ENCODE measurements at regions of chr7 and their contacts with region 1.

Region 1: GRCh38 chr7:39623018-39623731 is at the start of gene RALA:
- DNase-seq: peak; percentile 93
- H3K4me3 ChIP-seq: peak within 1 kb of the TSS; percentile 72 to 89 (median 76)
- H3K27ac ChIP-seq: peak within 1 kb of the TSS; percentile 88
- H3K4me1 ChIP-seq: peaks cover 44% of the 10 kb centered on the region
- H3K27me3 ChIP-seq: no peaks in the 10 kb centered on the region
- CTCF ChIP-seq: no peak
- total RNA-seq, gene RALA: 15.2 to 51.7 TPM

Region 2: DNA sequence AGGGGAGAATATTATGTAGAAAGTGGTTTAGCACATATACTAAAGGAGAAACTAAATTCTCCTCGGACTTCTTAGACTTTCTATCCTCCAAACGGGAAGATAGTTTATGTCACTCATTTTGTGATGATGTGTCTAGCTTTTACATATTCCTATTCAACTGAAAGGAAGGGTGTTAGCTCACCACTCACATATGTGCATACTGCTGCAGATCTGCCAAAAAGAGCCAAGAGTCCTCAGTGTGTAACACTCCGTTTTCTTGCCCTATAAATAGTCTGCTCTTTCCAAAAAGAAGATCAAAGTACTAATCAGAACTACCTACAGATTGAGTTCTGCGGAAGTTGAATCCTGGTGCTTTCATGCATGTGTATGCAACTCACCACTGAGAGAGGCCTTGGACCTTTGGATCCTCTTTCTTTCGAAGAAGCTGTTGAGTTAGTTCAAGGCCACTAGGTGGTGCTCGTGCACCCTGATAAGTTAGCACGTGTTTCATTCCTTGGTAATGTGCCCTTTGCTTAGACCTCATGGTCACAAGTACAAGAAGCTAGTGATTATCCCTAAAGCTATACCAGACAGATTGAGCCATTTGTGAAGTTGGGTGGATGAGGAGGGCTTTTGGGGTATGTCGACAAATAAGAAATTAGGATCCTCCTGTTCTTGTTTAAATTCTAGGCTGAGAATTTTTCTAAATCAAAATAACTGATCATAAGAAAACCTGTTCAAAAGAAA is 42.9 kb before region 1 on chr7:
- CTCF ChIA-PET with region 1: interaction called, 5 read pairs
- dilution Hi-C with region 1: no loop called
- in situ Hi-C with region 1: no loop called
- intact Hi-C with region 1: loop called (anchors 1 kb)
- DNase-seq: peak; percentile 76
- H3K4me3 ChIP-seq: no peak overlapping the region
- H3K27ac ChIP-seq: no peak overlapping the region
- H3K4me1 ChIP-seq: no peaks in the 10 kb centered on the region
- H3K27me3 ChIP-seq: no peaks in the 10 kb centered on the region
- CTCF ChIP-seq: peak; percentile 80 to 81

Region 3: DNA sequence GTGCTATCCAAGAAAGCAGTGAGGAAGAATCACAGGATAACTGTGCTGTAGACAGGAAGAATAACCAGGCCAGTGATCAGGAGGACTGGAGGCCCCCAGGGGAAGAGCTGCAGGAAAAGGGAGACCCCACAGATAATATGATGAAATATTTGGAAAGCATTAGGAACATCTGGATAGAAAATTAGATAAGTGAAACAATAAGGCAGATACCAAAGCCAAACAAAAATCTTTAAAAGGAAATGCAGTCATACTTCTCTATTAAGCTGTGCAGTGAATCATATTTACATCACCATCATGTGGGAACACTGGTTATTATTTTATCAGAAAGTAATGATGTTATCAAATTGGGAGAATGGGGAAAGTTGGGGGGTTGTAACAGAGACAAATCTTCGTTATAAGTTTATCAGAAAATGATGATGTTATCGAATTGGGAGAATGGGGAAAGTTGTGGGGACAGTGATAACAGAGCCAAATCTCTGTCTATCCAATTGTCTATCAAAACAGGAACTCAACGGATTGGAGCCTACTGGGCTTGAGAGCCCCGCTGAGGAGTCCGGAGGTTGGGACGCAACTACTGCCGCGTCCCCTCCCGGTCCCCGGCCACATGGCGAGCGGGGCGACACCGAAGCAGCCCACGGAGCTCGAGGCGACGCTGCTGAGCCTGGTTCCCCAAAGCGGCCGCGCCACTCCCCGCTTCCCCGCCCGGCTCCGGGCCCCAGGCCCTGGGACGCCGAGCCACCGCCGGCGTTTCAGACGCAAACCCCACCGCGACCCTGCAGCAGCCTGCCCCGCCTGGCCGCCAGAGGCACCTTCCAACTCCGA is 13.9 kb before region 1 on chr7:
- CTCF ChIA-PET with region 1: interaction called, 13 read pairs
- dilution Hi-C with region 1: no loop called
- in situ Hi-C with region 1: no loop called
- intact Hi-C with region 1: loop called (anchors 2 kb)
- DNase-seq: peak; percentile 74
- H3K4me3 ChIP-seq: peak overlapping the region in 1 of 3 experiments; percentile 16
- H3K27ac ChIP-seq: peak overlapping the region; percentile 75
- H3K4me1 ChIP-seq: peaks cover 55% of the 10 kb centered on the region
- H3K27me3 ChIP-seq: no peaks in the 10 kb centered on the region
- CTCF ChIP-seq: no peak

Region 4: GRCh38 chr7:39703144-39703543 is 80.0 kb after region 1 on chr7:
- CTCF ChIA-PET with region 1: no interaction called
- dilution Hi-C with region 1: no loop called
- in situ Hi-C with region 1: no loop called
- intact Hi-C with region 1: loop called (anchors 5 kb)
- DNase-seq: no peak
- H3K4me3 ChIP-seq: no peak overlapping the region
- H3K27ac ChIP-seq: no peak overlapping the region
- H3K4me1 ChIP-seq: peaks cover 19% of the 10 kb centered on the region
- H3K27me3 ChIP-seq: no peaks in the 10 kb centered on the region
- CTCF ChIP-seq: peak; percentile 20 to 39

Region 5: DNA sequence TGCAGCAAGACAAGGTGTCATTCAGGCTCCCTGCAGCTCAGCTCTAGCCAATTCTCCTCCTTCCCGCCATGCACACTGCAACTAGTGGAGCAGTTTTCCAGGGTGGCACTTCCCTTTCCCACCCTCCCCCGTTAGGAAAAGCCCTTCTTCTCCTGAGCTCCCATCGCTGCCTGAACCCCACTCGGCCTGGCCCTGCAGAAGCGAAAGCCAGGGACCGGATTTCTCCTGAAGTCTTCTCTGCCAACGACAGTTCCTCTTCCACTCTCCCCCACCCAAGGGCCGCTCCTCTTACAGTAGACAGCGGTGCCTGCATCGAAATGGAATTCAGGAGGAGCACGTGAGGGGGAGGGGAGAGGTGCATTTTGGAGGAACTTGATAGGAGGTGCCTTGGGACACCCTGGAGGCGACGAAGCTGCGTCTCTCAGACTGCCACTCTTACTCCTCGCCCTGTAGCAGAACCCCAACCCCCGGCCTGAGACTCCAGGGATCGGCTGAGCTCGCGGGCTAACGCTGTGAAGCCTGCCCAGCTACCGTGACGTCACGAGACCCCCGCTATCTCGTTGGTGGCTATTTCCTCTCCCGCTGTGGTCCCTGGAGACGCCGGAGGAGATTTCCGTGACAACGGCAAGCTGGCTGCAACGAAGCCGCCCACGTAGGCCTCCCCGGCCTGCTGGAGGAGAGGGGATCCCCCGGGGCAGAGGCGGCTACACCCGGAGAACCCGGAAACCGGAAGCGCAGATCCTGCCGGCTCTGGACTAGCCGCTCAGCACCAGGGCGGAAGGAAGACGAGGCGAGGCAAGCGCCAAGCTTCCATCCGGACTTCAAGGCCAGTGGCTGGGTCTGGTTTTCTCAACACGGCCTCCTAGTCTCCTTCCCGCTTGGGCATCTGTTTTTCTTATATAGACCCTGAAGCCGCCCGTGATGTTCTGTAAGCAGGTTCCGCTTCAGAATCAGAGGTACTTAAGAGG is 109.9 kb after region 1 on chr7:
- CTCF ChIA-PET with region 1: no interaction called
- dilution Hi-C with region 1: no loop called
- in situ Hi-C with region 1: no loop called
- intact Hi-C with region 1: loop called (anchors 1 kb)
- DNase-seq: peak; percentile 94
- H3K4me3 ChIP-seq: peak overlapping the region; percentile 51 to 65 (median 56)
- H3K27ac ChIP-seq: peak overlapping the region; percentile 92
- H3K4me1 ChIP-seq: peaks cover 19% of the 10 kb centered on the region
- H3K27me3 ChIP-seq: no peaks in the 10 kb centered on the region
- CTCF ChIP-seq: no peak

Region 6: GRCh38 chr7:39746103-39746819 is 123.1 kb after region 1 on chr7:
- CTCF ChIA-PET with region 1: no interaction called
- dilution Hi-C with region 1: no loop called
- in situ Hi-C with region 1: no loop called
- intact Hi-C with region 1: loop called (anchors 1 kb)
- DNase-seq: peak; percentile 69
- H3K4me3 ChIP-seq: no peak overlapping the region
- H3K27ac ChIP-seq: peak overlapping the region; percentile 29
- H3K4me1 ChIP-seq: peaks cover 41% of the 10 kb centered on the region
- H3K27me3 ChIP-seq: no peaks in the 10 kb centered on the region
- CTCF ChIP-seq: peak; percentile 79 to 89

Region 7: DNA sequence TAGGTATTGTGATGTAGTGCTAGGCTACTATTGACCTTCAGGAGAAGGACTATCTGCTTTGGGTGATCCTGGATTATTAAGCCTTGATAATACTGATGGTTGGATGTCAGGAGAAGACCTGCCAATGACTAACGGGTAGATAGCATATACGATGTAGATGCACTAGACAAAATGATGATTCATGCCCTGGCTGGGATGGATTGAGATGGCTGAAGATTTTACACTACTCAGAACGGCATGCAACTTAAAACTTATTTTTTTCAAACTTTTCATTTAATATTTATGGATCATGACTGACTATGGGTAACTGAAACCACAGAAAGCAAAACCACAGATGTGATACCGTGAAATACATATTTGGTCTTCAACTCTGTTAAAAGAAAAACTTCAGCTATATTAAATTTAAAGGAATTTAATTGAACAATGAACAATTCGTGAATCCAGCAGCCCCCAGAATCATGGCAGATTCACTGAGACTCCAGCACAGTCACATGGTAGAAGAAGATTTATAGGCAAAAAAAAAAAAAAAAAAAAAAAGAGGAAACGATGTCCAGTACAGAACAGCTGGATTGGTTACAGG is 202.3 kb after region 1 on chr7:
- CTCF ChIA-PET with region 1: no interaction called
- dilution Hi-C with region 1: no loop called
- in situ Hi-C with region 1: no loop called
- intact Hi-C with region 1: no loop called
- DNase-seq: no peak
- H3K4me3 ChIP-seq: no peak overlapping the region
- H3K27ac ChIP-seq: no peak overlapping the region
- H3K4me1 ChIP-seq: no peaks in the 10 kb centered on the region
- H3K27me3 ChIP-seq: no peaks in the 10 kb centered on the region
- CTCF ChIP-seq: no peak

Region 8: DNA sequence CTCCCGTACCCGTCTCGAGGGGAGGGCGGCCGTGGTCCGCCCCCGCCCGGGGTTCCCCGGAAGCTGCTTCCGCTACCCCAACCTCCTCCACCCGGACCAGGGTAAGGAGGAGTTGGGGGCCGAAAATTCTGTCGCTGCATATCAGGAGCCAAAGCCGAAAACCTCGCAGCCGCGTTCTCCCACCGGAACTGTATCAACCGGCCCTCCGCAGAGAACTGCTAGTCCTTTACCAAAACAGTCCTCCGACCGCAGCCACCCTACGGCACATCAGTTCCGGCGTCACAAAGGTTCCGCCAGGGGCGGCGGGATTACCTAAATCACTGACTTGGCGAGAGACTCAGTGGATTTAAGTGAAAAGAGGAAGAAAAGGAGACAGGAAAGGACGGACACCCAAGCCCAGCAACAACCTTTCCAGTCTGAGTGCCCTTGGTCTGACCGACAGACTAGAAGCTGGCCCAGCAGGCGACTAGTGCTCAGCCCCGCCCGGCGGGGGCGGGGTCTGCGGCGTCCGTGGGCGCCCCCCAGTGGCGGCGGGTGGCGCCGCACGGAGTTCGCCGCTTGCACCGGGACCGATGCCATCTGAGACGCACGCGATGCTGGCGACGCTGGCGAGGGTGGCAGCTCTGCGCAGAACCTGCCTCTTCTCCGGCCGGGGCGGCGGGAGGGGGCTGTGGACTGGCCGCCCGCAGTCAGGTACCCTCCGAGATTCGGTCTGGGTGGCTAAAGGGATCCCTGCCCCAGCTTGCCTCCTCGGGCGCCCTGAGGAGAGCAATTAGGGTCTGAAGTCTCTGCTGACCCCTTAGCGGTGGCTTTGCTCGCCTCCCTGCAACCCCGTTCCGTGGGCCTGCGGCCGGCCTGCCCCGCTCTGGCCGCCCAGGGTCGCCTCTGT is 511.5 kb after region 1 on chr7 and contains the starts of genes MPLKIP and SUGCT:
- CTCF ChIA-PET with region 1: no interaction called
- dilution Hi-C with region 1: no loop called
- in situ Hi-C with region 1: no loop called
- intact Hi-C with region 1: loop called (anchors 10 kb)
- DNase-seq: peak; percentile 85
- H3K4me3 ChIP-seq: peak within 1 kb of the TSS; percentile 72 to 96 (median 80)
- H3K27ac ChIP-seq: peak within 1 kb of the TSS; percentile 88
- H3K4me1 ChIP-seq: peaks cover 3% of the 10 kb centered on the region
- H3K27me3 ChIP-seq: no peaks in the 10 kb centered on the region
- CTCF ChIP-seq: peak; percentile 65 to 87
- total RNA-seq, gene MPLKIP: 17.8 to 45.4 TPM
- total RNA-seq, gene SUGCT: 12.3 to 138 TPM

Measured in mammary epithelial cell (primary cell).